Activated CD4-positive, alpha-beta T cell treated with anti-CD3 and anti-CD28 coated beads for 36 hours (primary cell): ENCODE measurements at regions of chr15 and their contacts with region 1.

Region 1: DNA sequence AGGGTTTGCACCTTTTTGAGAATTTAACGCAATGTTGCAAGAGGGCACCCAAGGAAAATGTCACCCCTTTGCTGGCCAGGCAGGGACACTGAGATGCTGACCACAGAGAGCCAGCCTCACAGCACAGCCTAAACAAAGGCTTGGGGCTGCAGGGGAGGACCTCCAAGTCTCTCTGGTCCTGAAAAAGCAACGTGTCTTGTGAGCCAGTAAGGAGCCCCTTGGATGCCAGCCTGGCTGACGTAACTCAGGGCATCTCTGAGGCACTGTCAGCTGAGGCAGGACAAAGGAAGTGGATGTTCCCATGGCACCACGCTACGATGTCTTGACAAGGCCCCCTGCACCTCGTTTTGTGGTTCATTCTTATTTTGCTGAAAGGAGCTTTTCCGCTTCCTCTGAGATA is 160.6 kb downstream of the OR4M2 start:
- DNase-seq: no peak
- ATAC-seq: no peak
- H3K4me3 Mint-ChIP-seq: no peak overlapping the region
- H3K27ac Mint-ChIP-seq: no peak overlapping the region
- H3K4me1 Mint-ChIP-seq: peaks cover 9% of the 10 kb centered on the region
- H3K27me3 Mint-ChIP-seq: peaks cover 10% of the 10 kb centered on the region

Region 2: DNA sequence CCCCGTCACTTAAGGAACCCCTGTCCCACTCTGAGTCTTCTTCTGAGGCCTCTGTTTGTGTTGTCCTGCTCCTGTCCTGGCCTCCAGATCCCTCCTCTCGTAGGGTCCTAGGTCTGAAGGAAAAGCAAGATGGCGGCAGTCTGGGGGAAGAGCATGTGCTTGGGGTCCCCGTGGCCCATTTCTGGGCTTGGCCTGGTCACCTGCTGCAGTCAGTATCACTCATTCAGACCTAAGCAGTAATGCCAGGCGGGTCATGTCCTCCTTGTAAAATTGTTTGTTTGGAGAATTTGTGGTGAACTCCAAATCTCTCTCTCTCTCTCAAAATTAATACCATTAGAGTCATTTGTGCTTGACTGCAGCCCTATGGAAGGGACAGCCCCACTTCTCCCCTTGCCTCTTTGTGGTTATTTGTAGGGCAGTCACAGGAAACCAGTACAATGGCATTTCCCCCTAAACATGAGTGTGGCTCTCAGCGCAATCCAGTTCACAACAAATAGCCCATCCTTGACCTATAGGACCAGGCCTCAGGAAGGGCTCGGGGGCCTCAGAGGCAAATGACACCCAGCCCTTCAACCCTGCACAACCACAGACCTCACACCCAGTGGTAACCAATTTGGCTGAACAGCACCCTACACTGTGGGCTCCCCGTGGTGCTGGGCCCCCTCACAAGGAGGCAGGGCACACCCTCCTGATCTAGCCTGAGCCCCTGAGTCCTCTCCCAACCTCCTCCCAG is 12.9 kb after region 1 on chr15:
- CTCF ChIA-PET with region 1: interaction called, 6 read pairs
- POLR2A ChIA-PET with region 1: no interaction called
- intact Hi-C with region 1: loop called (anchors 1 to 2 kb)
- DNase-seq: peak; percentile 47
- ATAC-seq: peak; percentile 68
- H3K4me3 Mint-ChIP-seq: no peak overlapping the region
- H3K27ac Mint-ChIP-seq: peak overlapping the region; percentile 8
- H3K4me1 Mint-ChIP-seq: peaks cover 17% of the 10 kb centered on the region
- H3K27me3 Mint-ChIP-seq: peaks cover 24% of the 10 kb centered on the region

Region 3: DNA sequence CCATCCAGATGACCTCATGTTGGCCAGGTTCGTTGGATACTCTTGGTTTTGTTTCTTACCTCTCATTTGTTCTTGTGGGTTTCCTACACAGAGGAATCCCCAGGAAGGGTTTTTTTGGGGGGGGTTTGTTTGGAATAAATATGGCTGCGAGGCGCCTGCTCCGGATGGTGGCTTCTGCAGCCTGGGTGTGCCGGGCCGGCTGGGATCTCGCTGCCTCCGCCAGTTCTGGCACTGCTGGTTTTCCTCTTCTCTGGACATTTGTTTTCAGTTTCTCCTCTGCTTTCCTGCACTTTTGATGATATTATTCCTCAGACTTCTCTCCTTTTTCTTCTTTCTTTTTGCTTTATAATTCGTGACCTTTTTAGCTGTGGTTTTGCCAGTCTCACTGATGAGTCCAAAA is 26.8 kb after region 1 on chr15:
- CTCF ChIA-PET with region 1: no interaction called
- POLR2A ChIA-PET with region 1: no interaction called
- intact Hi-C with region 1: loop called in 1 of 2 experiments (anchors 2 kb)
- DNase-seq: no peak
- ATAC-seq: no peak
- H3K4me3 Mint-ChIP-seq: no peak overlapping the region
- H3K27ac Mint-ChIP-seq: no peak overlapping the region
- H3K4me1 Mint-ChIP-seq: no peaks in the 10 kb centered on the region
- H3K27me3 Mint-ChIP-seq: peaks cover 2% of the 10 kb centered on the region

Region 4: GRCh38 chr15:22918056-22918455 is 677.1 kb after region 1 on chr15:
- CTCF ChIA-PET with region 1: no interaction called
- POLR2A ChIA-PET with region 1: no interaction called
- intact Hi-C with region 1: no loop called
- DNase-seq: no peak
- ATAC-seq: no peak
- H3K4me3 Mint-ChIP-seq: no peak overlapping the region
- H3K27ac Mint-ChIP-seq: no peak overlapping the region
- H3K4me1 Mint-ChIP-seq: no peaks in the 10 kb centered on the region
- H3K27me3 Mint-ChIP-seq: no peaks in the 10 kb centered on the region